Activated CD4-positive, alpha-beta memory T cell treated with anti-CD3 and anti-CD28 coated beads, Interleukin-2, amount 10 ng/mL, durations not matched to agents 7 days and 5 days (primary cell): ENCODE measurements at regions of chr1 and their contacts with region 1.

Region 1: GRCh38 chr1:12511516-12512468 is 106.2 kb downstream of the DHRS3 start:
- DNase-seq: no peak
- H3K4me3 Mint-ChIP-seq: peak overlapping the region; percentile 79
- H3K27ac Mint-ChIP-seq: peak overlapping the region; percentile 95
- H3K4me1 Mint-ChIP-seq: peaks cover 36% of the 10 kb centered on the region
- H3K27me3 Mint-ChIP-seq: no peaks in the 10 kb centered on the region

Region 2: GRCh38 chr1:12229835-12230548 is 281.8 kb before region 1 on chr1 and contains the start of gene VPS13D:
- CTCF ChIA-PET with region 1: no interaction called
- POLR2A ChIA-PET with region 1: no interaction called
- DNase-seq: peak; percentile 87
- H3K4me3 Mint-ChIP-seq: peak within 1 kb of the TSS; percentile 83
- H3K27ac Mint-ChIP-seq: peak within 1 kb of the TSS; percentile 44
- H3K4me1 Mint-ChIP-seq: peaks cover 11% of the 10 kb centered on the region
- H3K27me3 Mint-ChIP-seq: peaks cover 7% of the 10 kb centered on the region
- total RNA-seq, gene VPS13D: 28.1 to 31.4 TPM

Region 3: GRCh38 chr1:12386130-12386529 is 125.7 kb before region 1 on chr1:
- CTCF ChIA-PET with region 1: no interaction called
- POLR2A ChIA-PET with region 1: interaction called, 10 read pairs
- DNase-seq: no peak
- H3K4me3 Mint-ChIP-seq: no peak overlapping the region
- H3K27ac Mint-ChIP-seq: peak overlapping the region; percentile 73
- H3K4me1 Mint-ChIP-seq: peaks cover 52% of the 10 kb centered on the region
- H3K27me3 Mint-ChIP-seq: no peaks in the 10 kb centered on the region

Region 4: DNA sequence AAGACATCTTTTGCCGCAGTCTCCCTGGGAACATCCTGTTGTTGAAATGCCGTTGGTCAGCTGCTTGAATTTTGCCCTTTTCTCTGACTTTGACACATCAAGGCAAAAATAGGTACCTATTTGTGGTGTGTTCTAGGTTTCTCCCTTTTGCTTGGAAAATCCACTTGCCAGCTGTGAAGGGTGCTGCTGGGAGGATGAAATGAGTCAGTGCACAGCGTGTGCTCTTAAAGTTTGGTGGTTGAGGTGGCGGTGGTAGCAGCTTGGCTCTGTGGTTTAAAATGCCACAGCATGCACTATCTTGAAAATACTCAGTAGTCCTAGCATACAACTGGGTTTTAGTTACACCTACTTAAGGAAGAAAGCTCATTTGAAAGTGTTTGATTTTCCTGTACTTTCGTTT is 77.6 kb before region 1 on chr1:
- CTCF ChIA-PET with region 1: no interaction called
- POLR2A ChIA-PET with region 1: interaction called, 15 read pairs
- DNase-seq: peak; percentile 81
- H3K4me3 Mint-ChIP-seq: peak overlapping the region; percentile 42
- H3K27ac Mint-ChIP-seq: peak overlapping the region; percentile 67
- H3K4me1 Mint-ChIP-seq: peaks cover 63% of the 10 kb centered on the region
- H3K27me3 Mint-ChIP-seq: peaks cover 2% of the 10 kb centered on the region

Region 5: DNA sequence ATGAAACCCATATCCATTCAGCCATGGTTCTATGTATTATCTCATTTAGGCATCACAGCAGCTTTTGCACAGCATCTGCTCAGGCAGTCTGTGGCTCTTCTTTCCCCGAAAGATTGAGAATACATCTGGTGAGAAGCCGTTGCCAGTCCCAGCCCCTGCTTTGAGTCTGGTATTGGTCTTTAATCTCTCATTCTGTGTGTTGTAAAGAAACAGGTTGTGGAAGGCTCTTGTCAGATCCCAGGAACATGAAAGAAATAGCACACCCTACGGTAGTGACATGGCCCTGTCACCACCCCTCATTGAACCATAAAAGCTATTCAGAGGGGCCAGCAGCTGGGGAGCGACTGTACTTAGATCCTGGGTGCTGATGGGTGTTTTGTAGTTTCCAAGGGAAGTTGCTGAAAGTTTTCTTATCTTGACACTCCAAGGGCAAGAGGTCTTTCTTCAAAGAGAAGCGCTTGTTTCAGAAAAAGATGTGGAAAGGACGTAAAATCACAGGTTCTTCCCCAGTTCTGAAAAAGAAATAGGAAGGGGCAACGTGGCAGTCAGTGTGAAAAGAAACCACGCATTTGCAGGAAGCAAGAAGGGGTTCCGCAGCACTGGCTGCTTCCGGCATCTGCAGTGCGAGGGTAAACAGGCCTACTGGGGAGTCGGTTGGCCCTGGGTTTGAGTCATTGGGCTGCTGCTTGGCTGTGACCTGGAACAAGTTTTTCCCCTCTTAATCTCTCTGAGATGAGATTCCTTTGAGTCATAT is 38.8 kb before region 1 on chr1:
- CTCF ChIA-PET with region 1: no interaction called
- POLR2A ChIA-PET with region 1: interaction called, 41 read pairs
- DNase-seq: peak; percentile 76
- H3K4me3 Mint-ChIP-seq: peak overlapping the region; percentile 61
- H3K27ac Mint-ChIP-seq: peak overlapping the region; percentile 86
- H3K4me1 Mint-ChIP-seq: peaks cover 70% of the 10 kb centered on the region
- H3K27me3 Mint-ChIP-seq: no peaks in the 10 kb centered on the region

Region 6: GRCh38 chr1:12477936-12478611 is 33.7 kb before region 1 on chr1:
- CTCF ChIA-PET with region 1: no interaction called
- POLR2A ChIA-PET with region 1: interaction called, 41 read pairs
- DNase-seq: no peak
- H3K4me3 Mint-ChIP-seq: no peak overlapping the region
- H3K27ac Mint-ChIP-seq: peak overlapping the region; percentile 70
- H3K4me1 Mint-ChIP-seq: peaks cover 81% of the 10 kb centered on the region
- H3K27me3 Mint-ChIP-seq: no peaks in the 10 kb centered on the region

Region 7: GRCh38 chr1:12572506-12572905 is 60.7 kb after region 1 on chr1:
- CTCF ChIA-PET with region 1: no interaction called
- POLR2A ChIA-PET with region 1: no interaction called
- DNase-seq: no peak
- H3K4me3 Mint-ChIP-seq: no peak overlapping the region
- H3K27ac Mint-ChIP-seq: no peak overlapping the region
- H3K4me1 Mint-ChIP-seq: no peaks in the 10 kb centered on the region
- H3K27me3 Mint-ChIP-seq: no peaks in the 10 kb centered on the region

Region 8: GRCh38 chr1:12604114-12604874 is 92.5 kb after region 1 on chr1:
- CTCF ChIA-PET with region 1: no interaction called
- POLR2A ChIA-PET with region 1: interaction called, 12 read pairs
- DNase-seq: peak; percentile 83
- H3K4me3 Mint-ChIP-seq: no peak overlapping the region
- H3K27ac Mint-ChIP-seq: peak overlapping the region; percentile 24
- H3K4me1 Mint-ChIP-seq: peaks cover 27% of the 10 kb centered on the region
- H3K27me3 Mint-ChIP-seq: peaks cover 4% of the 10 kb centered on the region

Region 9: GRCh38 chr1:12677565-12677964 is 165.8 kb after region 1 on chr1:
- CTCF ChIA-PET with region 1: no interaction called
- POLR2A ChIA-PET with region 1: no interaction called
- DNase-seq: no peak
- H3K4me3 Mint-ChIP-seq: no peak overlapping the region
- H3K27ac Mint-ChIP-seq: no peak overlapping the region
- H3K4me1 Mint-ChIP-seq: no peaks in the 10 kb centered on the region
- H3K27me3 Mint-ChIP-seq: peaks cover 14% of the 10 kb centered on the region